PC-3 (cell line): ENCODE measurements at regions of chr2 and their contacts with region 1.

Region 1: DNA sequence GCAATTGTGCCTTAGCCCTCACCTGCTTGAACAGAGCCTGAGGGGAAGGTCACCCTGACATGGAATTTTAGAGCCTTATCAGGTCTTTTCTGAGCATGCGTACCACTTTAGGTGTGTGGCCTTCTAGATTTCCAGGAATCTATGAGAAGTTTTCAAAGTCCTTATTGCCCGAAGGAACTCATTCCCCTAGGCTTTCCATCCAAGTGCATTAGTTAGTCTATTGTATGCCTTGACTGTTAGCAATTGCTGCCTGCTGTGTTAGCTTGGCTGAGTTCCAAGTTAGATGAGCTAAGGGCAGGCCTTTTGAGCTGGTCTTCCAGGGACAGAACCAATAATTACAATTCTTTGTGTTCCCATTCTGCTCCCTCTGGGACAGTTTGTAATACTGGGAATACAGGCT is 30.8 kb upstream of the PUM2 start:
- DNase-seq: peak; percentile 12
- ATAC-seq: no peak
- H3K4me3 ChIP-seq: no peak overlapping the region
- H3K27ac ChIP-seq: no peak overlapping the region
- H3K4me1 ChIP-seq: peaks cover 22% of the 10 kb centered on the region
- H3K27me3 ChIP-seq: no peaks in the 10 kb centered on the region
- CTCF ChIP-seq: no peak

Region 2: GRCh38 chr2:20350753-20351554 is 30.5 kb before region 1 on chr2 and contains the start of gene PUM2:
- CTCF ChIA-PET with region 1: interaction called, 3 read pairs
- POLR2A ChIA-PET with region 1: no interaction called
- intact Hi-C with region 1: loop called (anchors 2 kb)
- DNase-seq: peak; percentile 98
- ATAC-seq: peak; percentile 77
- H3K4me3 ChIP-seq: peak within 1 kb of the TSS; percentile 92
- H3K27ac ChIP-seq: peak within 1 kb of the TSS; percentile 87
- H3K4me1 ChIP-seq: peaks cover 35% of the 10 kb centered on the region
- H3K27me3 ChIP-seq: no peaks in the 10 kb centered on the region
- CTCF ChIP-seq: no peak
- total RNA-seq, gene PUM2: 14.9 and 25.3 TPM in 2 replicates

Region 3: GRCh38 chr2:20438334-20439192 is 57.1 kb after region 1 on chr2:
- CTCF ChIA-PET with region 1: no interaction called
- POLR2A ChIA-PET with region 1: no interaction called
- intact Hi-C with region 1: loop called (anchors 5 kb)
- DNase-seq: peak; percentile 87
- ATAC-seq: peak; percentile 90
- H3K4me3 ChIP-seq: peak overlapping the region; percentile 57
- H3K27ac ChIP-seq: peak overlapping the region; percentile 83
- H3K4me1 ChIP-seq: peaks cover 23% of the 10 kb centered on the region
- H3K27me3 ChIP-seq: no peaks in the 10 kb centered on the region
- CTCF ChIP-seq: no peak

Region 4: DNA sequence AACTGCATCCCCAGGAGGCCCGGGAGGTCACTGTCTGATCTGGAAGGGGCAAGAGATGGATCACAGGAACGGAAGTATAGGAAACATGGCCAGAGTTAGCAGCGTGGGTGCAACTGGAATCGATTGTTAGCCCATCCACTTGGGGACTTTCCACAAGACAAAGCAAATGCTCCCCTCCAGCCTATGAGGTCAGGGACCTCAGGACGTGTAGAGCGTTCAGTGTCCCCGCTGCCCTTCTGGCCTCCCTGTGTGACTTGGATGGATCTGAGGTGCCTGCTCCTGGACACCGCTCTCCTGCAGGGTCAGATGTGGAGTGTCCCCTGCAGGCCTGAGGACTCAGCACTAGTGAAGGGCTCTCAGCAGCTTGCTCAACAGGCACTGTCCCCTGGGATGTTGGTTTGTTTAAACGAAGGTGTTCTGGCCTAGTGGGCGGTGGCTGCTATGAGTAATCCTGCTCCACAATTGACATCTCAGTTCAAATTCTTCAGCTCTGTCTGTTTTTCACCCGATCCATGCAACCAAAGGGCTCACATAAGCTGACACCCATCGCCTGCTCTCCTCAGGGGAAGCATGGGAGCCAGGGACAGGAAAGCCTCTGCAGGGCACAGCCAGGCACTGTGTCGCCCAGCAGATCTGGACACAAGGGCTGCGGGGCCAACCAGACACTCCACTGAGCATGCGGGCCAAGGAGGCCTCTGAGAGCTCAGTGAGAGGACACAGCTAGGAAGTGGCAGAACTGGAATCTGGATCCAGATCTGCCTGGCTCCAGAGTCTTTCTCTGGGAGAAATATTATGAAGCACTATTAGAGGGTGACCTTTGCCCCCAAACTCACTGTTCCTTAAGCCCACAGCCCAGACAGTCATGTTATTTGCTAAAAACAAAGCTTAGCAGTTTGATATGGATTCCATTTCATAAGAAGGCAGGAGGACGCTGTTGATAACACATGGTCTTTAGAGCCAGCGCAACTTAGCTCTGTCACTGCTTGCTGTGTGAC is 143.9 kb after region 1 on chr2:
- CTCF ChIA-PET with region 1: no interaction called
- POLR2A ChIA-PET with region 1: no interaction called
- intact Hi-C with region 1: no loop called
- DNase-seq: peak; percentile 70
- ATAC-seq: peak; percentile 94
- H3K4me3 ChIP-seq: no peak overlapping the region
- H3K27ac ChIP-seq: no peak overlapping the region
- H3K4me1 ChIP-seq: peaks cover 13% of the 10 kb centered on the region
- H3K27me3 ChIP-seq: no peaks in the 10 kb centered on the region
- CTCF ChIP-seq: 0 out of 2 replicates have a peak, but pooled peaks have one; percentile 9